HepG2 (cell line): ENCODE measurements at regions of chr5 and their contacts with region 1.

Region 1: GRCh38 chr5:59506285-59506877 is 387.1 kb downstream of the PDE4D start:
- DNase-seq: peak; percentile 6
- ATAC-seq: no peak
- H3K4me3 ChIP-seq: no peak overlapping the region
- H3K27ac ChIP-seq: no peak overlapping the region
- H3K4me1 ChIP-seq: no peaks in the 10 kb centered on the region
- H3K27me3 ChIP-seq: no peaks in the 10 kb centered on the region
- CTCF ChIP-seq: no peak
- EP300 ChIP-seq: no peak
- POLR2A ChIP-seq: no peak
- RAD21 ChIP-seq: no peak

Region 2: DNA sequence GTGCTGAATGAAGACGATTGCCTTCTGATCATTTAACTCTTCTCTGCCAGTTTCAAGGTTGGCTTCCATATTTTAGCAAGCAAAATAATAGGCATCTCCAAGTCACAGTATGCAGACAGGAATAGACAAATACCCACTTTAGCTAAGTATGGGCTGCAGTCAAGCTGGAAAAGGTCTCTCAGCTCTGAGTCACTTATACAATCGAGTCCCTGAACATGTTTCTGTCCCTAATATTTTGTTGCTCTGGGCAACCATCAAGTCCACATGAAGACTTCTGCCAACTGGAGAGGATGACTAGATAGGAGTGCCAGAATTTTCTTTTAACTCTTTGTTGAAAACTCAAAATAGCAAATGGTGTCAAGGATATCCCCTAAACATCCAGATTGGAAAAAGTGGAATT is 348.2 kb before region 1 on chr5:
- CTCF ChIA-PET with region 1: no interaction called
- POLR2A ChIA-PET with region 1: no interaction called
- in situ Hi-C with region 1: no loop called
- intact Hi-C with region 1: no loop called
- DNase-seq: no peak
- ATAC-seq: no peak
- H3K4me3 ChIP-seq: no peak overlapping the region
- H3K27ac ChIP-seq: no peak overlapping the region
- H3K4me1 ChIP-seq: peaks cover 9% of the 10 kb centered on the region; the same call in 1 of the 2 replicates
- H3K27me3 ChIP-seq: no peaks in the 10 kb centered on the region
- CTCF ChIP-seq: no peak
- EP300 ChIP-seq: no peak
- POLR2A ChIP-seq: no peak
- RAD21 ChIP-seq: no peak

Region 3: GRCh38 chr5:59673438-59674058 is 167.2 kb after region 1 on chr5:
- CTCF ChIA-PET with region 1: interaction called, 12 read pairs
- POLR2A ChIA-PET with region 1: no interaction called
- in situ Hi-C with region 1: loop called (anchors 25 kb)
- intact Hi-C with region 1: loop called (anchors 1 kb)
- DNase-seq: peak; percentile 16
- ATAC-seq: no peak
- H3K4me3 ChIP-seq: no peak overlapping the region
- H3K27ac ChIP-seq: no peak overlapping the region
- H3K4me1 ChIP-seq: no peaks in the 10 kb centered on the region
- H3K27me3 ChIP-seq: no peaks in the 10 kb centered on the region; a peak in 1 of 5 replicates
- CTCF ChIP-seq: peak; percentile 59
- EP300 ChIP-seq: no peak
- POLR2A ChIP-seq: no peak
- RAD21 ChIP-seq: no peak

Region 4: GRCh38 chr5:59724482-59725391 is 218.4 kb after region 1 on chr5:
- CTCF ChIA-PET with region 1: no interaction called
- POLR2A ChIA-PET with region 1: no interaction called
- in situ Hi-C with region 1: no loop called
- intact Hi-C with region 1: loop called (anchors 5 kb)
- DNase-seq: peak; percentile 15
- ATAC-seq: 0 out of 3 replicates have a peak, but pooled peaks have one; percentile 51
- H3K4me3 ChIP-seq: no peak overlapping the region
- H3K27ac ChIP-seq: no peak overlapping the region
- H3K4me1 ChIP-seq: no peaks in the 10 kb centered on the region
- H3K27me3 ChIP-seq: no peaks in the 10 kb centered on the region
- CTCF ChIP-seq: peak; percentile 64
- EP300 ChIP-seq: no peak
- POLR2A ChIP-seq: no peak
- RAD21 ChIP-seq: no peak

Region 5: DNA sequence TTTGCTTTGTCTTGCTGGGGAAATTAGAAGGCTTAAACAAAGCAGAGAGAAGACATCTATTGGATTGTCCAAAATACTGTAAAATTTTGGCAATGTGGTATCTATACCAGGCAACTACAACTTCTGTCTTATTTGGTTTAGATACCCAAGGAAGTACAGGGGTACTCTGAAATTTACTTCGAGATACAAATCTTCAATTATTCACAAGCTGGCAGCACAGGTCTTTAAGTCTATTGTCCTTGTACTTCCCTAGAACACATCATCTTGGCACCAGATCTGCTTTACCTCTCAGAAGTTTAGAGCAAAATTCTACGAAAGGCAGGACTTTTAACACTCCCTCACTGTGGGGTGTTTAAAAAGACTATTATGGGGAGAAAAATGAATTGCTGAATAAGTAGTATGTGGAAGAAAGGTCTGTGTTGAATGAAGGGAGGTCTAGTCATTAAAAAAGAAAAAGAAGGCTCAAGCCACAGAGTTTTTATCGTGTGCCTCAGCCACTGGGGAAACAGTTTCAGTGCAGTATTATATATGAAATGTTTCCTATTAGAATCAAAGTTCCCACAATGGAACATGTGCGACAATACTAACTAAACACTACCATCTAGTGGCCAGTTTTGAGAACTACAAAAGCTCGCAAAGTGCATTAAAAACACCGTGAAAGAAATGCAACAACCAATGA is 293.4 kb after region 1 on chr5:
- CTCF ChIA-PET with region 1: interaction called, 5 read pairs
- POLR2A ChIA-PET with region 1: no interaction called
- in situ Hi-C with region 1: no loop called
- intact Hi-C with region 1: loop called (anchors 2 kb)
- DNase-seq: peak; percentile 7
- ATAC-seq: no peak
- H3K4me3 ChIP-seq: no peak overlapping the region
- H3K27ac ChIP-seq: no peak overlapping the region
- H3K4me1 ChIP-seq: no peaks in the 10 kb centered on the region
- H3K27me3 ChIP-seq: no peaks in the 10 kb centered on the region
- CTCF ChIP-seq: peak; percentile 61
- EP300 ChIP-seq: no peak
- POLR2A ChIP-seq: no peak
- RAD21 ChIP-seq: no peak